ENCODE measurements at regions of chr12 and their contacts with region 1.

Region 1: GRCh38 chr12:109428037-109428629 is 49.0 kb downstream of the KCTD10 start:
- DNase-seq: peak; percentile 50 to 96 (median 78)

Region 2: DNA sequence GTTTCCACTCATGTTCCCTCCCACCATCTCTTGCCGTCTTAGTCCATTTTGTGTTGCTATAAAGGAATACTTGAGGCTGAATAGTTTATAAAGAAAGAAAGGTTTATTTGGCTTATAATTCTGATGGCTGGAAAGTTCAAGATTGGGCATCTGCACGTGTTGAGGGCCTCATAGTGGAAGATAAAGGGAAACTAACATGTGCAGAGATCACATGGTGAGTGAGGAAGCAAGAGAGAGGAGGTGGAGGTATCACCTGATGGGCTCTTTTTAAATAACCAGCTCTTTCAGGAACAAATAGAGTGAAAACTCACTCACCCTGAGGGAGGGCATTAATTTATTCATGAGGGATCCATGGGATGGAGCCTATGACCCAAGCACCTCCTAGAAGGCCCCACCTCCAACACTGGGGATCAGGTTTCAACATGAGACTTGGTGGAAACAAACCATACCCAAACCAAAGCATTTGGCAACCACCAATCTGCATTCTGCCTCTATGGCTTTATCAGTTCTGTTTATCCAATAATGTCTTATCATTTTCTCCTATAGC is 50.9 kb before region 1 on chr12:
- intact Hi-C with region 1: no loop called
- DNase-seq: no peak

Region 3: GRCh38 chr12:109477185-109477962 is 49.2 kb after region 1 on chr12 and contains the starts of genes KCTD10 and UBE3B:
- intact Hi-C with region 1: loop called (anchors 5 kb)
- DNase-seq: peak; percentile 76 to 98 (median 86)

Measured in posterior cingulate gyrus (tissue), 11 donors.